ENCODE measurements at regions of chr4 and their contacts with region 1.

Region 1: DNA sequence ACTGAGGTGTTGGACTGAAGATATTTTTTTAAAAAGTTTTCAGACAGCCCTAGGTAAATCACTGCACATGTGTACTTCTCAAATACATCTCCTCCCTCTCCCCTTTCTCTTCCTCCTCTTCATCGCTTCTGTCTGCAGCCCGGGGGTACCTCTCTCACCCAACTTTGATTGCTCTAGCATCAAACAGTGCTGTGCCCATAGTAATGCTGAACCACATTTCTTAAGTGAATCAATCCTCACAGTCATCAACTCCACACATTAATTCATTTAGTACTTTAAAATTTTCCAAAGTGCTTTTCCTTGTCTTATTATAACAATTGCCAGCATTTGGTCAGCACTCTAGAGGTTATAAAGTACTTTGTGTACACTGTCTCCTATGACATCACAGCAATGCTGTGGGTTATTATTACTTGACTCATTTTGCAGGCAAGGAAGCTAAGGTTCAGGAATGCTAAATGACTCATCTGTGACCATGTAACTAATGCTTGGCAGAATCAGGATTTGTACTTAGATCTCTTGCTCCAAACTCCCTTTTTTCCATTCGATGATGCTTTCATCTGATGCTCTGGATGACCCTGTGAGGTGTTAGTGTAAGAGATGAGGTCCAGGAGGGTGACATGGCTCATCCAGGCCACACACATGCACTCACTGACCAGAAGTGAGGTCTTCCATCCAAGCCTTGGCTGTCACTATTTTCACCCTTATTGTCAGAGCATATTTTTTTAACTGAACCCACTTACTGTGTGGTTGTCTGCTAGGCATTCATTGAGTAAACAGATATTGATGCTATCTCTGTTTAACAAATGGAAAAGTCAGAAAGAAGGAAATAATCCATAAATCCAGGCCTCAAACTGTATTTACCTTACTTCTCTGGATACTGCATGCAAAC is 58.8 kb downstream of the RHOH start:
- DNase-seq: no peak
- H3K4me3 Mint-ChIP-seq: peak overlapping the region; percentile 53
- H3K27ac Mint-ChIP-seq: peak overlapping the region; percentile 80
- H3K4me1 Mint-ChIP-seq: peaks cover 55% of the 10 kb centered on the region
- H3K27me3 Mint-ChIP-seq: no peaks in the 10 kb centered on the region

Region 2: GRCh38 chr4:40195182-40196177 is 60.2 kb before region 1 on chr4:
- intact Hi-C with region 1: no loop called
- DNase-seq: no peak
- H3K4me3 Mint-ChIP-seq: peak overlapping the region; percentile 93
- H3K27ac Mint-ChIP-seq: peak overlapping the region; percentile 94
- H3K4me1 Mint-ChIP-seq: peaks cover 56% of the 10 kb centered on the region
- H3K27me3 Mint-ChIP-seq: no peaks in the 10 kb centered on the region

Region 3: DNA sequence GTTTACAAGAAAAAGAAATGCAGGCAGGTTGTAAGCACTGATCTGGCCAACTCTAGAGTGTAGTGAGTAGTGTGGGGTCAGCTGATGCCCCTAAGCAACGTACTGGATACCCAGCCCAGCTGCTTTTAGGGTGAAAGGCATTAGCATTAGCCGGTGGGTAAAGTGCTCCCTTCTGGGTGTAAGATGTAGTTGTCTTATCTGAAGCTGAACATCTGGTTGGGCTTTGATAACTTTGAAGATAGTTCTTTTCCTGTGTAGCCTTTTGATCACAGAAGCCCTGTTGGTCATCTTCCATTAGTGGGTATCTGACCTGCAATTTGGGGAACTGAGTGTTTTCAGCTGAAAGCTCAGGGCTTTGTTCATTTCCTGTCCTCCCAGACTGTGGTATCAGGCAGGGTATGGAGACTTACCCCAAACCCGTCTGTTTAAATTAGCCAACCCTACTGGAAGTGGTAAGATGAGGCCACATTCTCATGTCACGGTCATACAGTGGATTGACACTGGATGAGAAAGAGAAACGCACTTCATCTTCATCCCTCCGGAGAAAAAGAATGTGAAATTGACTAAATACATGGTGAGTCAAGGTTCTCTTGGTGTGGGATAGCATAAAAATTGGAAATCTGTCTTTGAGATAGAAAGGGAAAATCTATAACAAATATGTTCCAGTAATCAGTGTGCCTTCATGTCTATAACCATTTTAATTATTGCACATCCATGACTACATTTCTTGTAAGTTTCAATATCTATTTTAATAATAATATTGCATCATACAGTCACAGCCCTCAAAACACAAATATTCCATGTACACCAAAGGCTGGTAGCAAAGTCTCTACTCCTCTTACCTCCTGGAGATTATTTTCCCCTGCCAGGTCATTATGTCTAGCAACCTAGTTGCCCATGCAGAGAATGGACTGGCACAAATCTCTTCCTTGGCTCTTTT is 50.1 kb before region 1 on chr4:
- intact Hi-C with region 1: loop called (anchors 2 kb)
- DNase-seq: peak; percentile 87
- H3K4me3 Mint-ChIP-seq: peak overlapping the region; percentile 93
- H3K27ac Mint-ChIP-seq: peak overlapping the region; percentile 94
- H3K4me1 Mint-ChIP-seq: peaks cover 66% of the 10 kb centered on the region
- H3K27me3 Mint-ChIP-seq: no peaks in the 10 kb centered on the region

Region 4: DNA sequence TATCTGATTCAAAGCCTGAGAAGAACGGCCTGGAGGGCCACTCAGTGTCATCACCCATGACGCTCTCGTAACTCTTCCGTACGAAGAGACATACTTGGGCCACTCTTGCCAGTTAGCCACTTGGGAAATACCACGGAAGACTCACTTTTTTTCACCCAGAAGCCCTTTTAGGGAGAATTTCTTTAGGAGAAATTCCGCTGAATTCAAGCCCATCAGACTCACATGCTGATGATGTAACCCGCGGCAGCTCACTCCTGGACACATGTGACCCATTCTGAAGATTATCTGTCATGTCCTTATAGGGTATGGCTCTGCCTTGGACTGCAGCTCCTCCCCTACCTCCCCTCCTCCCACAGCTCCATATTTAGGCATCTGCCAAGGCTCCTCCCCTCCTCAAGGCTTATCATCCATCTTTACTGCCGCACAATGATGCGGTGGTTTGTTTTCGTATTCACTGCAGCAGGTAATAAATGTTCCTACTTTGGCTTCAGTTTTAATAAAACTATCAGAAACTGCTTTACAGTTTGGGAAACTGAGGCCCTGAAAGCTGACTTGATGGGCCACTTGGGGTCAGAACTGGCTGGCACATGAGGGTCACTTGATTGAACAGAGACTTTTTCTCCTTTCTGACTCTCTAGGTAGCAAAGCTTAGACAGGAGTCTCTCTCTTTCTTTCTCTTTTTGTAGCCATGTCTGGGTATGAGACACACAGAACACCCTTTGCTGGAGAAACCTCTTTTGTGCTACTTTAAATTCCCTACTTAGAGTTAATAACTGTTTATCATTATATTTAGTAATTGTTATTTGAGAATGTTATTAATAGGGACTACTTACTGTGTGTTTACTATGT is 16.7 kb before region 1 on chr4:
- intact Hi-C with region 1: loop called (anchors 1 kb)
- DNase-seq: peak; percentile 92
- H3K4me3 Mint-ChIP-seq: peak overlapping the region; percentile 75
- H3K27ac Mint-ChIP-seq: peak overlapping the region; percentile 95
- H3K4me1 Mint-ChIP-seq: peaks cover 81% of the 10 kb centered on the region
- H3K27me3 Mint-ChIP-seq: no peaks in the 10 kb centered on the region

Region 5: DNA sequence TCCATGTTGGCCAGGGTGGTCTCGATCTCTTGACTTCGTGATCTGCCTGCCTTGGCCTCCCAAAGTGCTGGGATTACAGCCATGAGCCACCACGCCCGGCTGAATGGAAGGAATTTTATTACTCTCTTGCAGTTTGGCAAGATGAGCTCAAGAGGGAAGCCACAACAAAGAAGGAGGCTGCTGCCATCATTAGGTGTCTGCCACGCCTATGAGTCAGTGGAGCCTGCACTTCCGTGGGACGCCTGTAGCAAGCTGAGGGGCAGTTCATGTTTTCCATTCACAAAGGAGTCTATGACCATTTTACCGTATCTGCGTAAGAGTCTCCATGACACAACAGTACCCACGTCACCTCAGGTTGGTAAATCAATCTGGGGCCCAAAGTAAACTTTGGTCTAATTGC is 28.3 kb after region 1 on chr4:
- intact Hi-C with region 1: loop called (anchors 1 kb)
- DNase-seq: peak; percentile 91
- H3K4me3 Mint-ChIP-seq: peak overlapping the region; percentile 66
- H3K27ac Mint-ChIP-seq: peak overlapping the region; percentile 95
- H3K4me1 Mint-ChIP-seq: peaks cover 50% of the 10 kb centered on the region
- H3K27me3 Mint-ChIP-seq: no peaks in the 10 kb centered on the region

Region 6: DNA sequence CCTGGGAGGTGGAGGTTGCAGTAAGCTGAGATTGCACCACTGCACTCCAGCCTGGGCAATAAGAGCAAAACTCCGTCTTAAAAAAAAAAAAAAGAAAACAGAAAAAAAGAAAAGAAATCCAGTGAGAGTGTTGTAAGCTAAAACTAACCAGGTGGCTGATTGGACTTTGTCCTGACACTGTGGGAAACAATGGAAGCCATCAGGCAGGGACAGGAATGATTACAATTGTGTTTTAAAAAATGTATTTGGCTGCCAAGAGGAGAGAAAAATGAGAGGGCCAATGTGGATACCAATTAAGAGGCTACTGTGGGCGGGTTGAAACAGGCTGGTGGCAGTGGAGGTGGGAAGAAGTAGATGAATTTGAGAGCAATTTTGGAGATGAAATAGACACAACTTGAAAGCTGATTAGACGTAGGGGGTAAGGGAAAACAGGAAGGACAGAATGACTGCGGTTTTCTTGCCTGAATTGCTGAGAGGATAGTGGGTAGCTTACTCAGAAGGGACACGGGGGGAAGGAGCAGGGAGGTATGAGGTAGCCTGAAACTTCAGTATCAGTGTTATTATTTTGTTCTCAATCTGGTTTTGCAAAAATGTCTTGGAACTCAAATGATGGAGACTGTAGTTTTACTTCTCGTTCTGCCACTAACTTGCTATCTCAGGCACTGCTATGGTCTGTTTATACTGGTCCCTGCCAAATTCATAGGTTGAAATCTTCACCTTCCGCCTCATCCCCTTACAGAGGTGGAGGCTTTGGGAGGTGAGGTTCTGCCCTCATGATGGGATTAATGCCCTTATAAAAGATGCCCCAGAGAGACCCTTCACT is 33.9 kb after region 1 on chr4:
- intact Hi-C with region 1: loop called (anchors 1 kb)
- DNase-seq: peak; percentile 77
- H3K4me3 Mint-ChIP-seq: peak overlapping the region; percentile 60
- H3K27ac Mint-ChIP-seq: peak overlapping the region; percentile 85
- H3K4me1 Mint-ChIP-seq: peaks cover 50% of the 10 kb centered on the region
- H3K27me3 Mint-ChIP-seq: no peaks in the 10 kb centered on the region